ENCODE measurements at regions of chr7 and their contacts with region 1.

Region 1: GRCh38 chr7:130084037-130084875 is 13.9 kb downstream of the KLHDC10 start:
- DNase-seq: no peak
- ATAC-seq: peak; percentile 48; the same call in 1 of the 2 replicates
- H3K4me3 Mint-ChIP-seq: no peak overlapping the region
- H3K27ac Mint-ChIP-seq: no peak overlapping the region
- H3K4me1 Mint-ChIP-seq: no peaks in the 10 kb centered on the region
- H3K27me3 Mint-ChIP-seq: no peaks in the 10 kb centered on the region
- CTCF ChIP-seq: no peak; the same call in 1 of the 2 replicates

Region 2: GRCh38 chr7:130069978-130070860 is 14.0 kb before region 1 on chr7 and contains the start of gene KLHDC10:
- CTCF ChIA-PET with region 1: interaction called, 27 read pairs
- POLR2A ChIA-PET with region 1: no interaction called
- DNase-seq: peak; percentile 95
- ATAC-seq: peak; percentile 92
- H3K4me3 Mint-ChIP-seq: peak within 1 kb of the TSS; percentile 93
- H3K27ac Mint-ChIP-seq: peak within 1 kb of the TSS; percentile 94
- H3K4me1 Mint-ChIP-seq: peaks cover 25% of the 10 kb centered on the region
- H3K27me3 Mint-ChIP-seq: no peaks in the 10 kb centered on the region
- CTCF ChIP-seq: no peak
- total RNA-seq, gene KLHDC10: 14.4 to 16.5 TPM (median 15.0 TPM) in 3 replicates

Region 3: DNA sequence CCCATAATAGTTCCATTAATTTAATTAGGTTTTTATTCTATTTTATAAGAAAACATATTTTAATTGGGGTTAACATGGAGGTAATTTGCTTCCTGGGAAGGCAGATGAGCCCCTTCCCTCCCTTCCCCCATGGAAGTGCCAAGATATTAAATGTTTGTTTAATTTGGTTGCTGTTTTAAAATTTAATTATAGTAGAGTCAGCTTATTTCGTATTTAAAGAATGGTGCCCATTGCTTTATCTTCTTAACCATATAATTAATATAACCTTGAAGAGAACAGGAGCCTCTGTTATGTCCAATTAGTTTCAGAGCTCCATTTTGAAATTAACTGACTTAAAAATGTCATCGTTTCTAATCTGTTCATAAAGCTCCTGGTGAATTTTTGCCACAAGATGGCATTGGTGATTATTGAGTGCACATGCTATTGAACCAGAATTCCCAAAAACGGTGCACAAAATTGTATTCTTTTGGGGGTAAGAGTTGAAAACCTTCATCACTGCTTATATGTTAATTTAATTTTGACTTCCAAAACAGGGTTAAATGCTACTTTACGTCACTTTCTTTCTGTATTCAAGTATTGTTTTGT is 12.1 kb after region 1 on chr7:
- CTCF ChIA-PET with region 1: interaction called, 14 read pairs
- POLR2A ChIA-PET with region 1: no interaction called
- DNase-seq: no peak
- ATAC-seq: no peak
- H3K4me3 Mint-ChIP-seq: no peak overlapping the region
- H3K27ac Mint-ChIP-seq: no peak overlapping the region
- H3K4me1 Mint-ChIP-seq: no peaks in the 10 kb centered on the region
- H3K27me3 Mint-ChIP-seq: no peaks in the 10 kb centered on the region
- CTCF ChIP-seq: no peak

Region 4: GRCh38 chr7:130102588-130102987 is 18.3 kb after region 1 on chr7:
- CTCF ChIA-PET with region 1: interaction called, 12 read pairs
- POLR2A ChIA-PET with region 1: no interaction called
- DNase-seq: no peak
- ATAC-seq: no peak
- H3K4me3 Mint-ChIP-seq: no peak overlapping the region
- H3K27ac Mint-ChIP-seq: no peak overlapping the region
- H3K4me1 Mint-ChIP-seq: 0 out of 2 replicates have a peak, but pooled peaks cover 3% of the 10 kb centered on the region
- H3K27me3 Mint-ChIP-seq: no peaks in the 10 kb centered on the region
- CTCF ChIP-seq: no peak

Region 5: GRCh38 chr7:130127821-130128317 is 43.6 kb after region 1 on chr7:
- CTCF ChIA-PET with region 1: no interaction called
- POLR2A ChIA-PET with region 1: no interaction called
- DNase-seq: no peak
- ATAC-seq: no peak
- H3K4me3 Mint-ChIP-seq: no peak overlapping the region
- H3K27ac Mint-ChIP-seq: no peak overlapping the region
- H3K4me1 Mint-ChIP-seq: peaks cover 9% of the 10 kb centered on the region
- H3K27me3 Mint-ChIP-seq: no peaks in the 10 kb centered on the region
- CTCF ChIP-seq: no peak

Region 6: GRCh38 chr7:130160455-130160854 is 76.2 kb after region 1 on chr7:
- CTCF ChIA-PET with region 1: no interaction called
- POLR2A ChIA-PET with region 1: no interaction called
- DNase-seq: no peak
- ATAC-seq: no peak
- H3K4me3 Mint-ChIP-seq: no peak overlapping the region
- H3K27ac Mint-ChIP-seq: no peak overlapping the region
- H3K4me1 Mint-ChIP-seq: no peaks in the 10 kb centered on the region
- H3K27me3 Mint-ChIP-seq: no peaks in the 10 kb centered on the region
- CTCF ChIP-seq: no peak

Region 7: DNA sequence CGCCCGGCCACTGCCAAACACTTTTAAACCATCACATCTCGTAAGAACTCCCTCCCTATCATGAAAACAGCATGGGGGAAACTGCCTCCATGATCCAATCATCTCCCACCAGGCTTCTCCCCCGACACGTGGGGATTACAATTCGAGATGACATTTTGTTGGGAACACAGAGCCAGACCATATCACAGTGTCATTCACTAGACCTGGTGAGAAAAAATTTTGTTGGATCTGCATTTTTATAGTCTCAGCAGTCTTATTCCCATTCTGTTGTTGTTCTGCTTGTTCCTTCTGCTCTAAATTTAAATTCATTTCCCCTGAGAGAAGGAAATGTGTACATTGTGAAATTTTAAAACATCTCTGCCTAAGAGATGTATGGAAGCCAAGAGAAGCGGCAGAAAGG is 1238.6 kb after region 1 on chr7:
- CTCF ChIA-PET with region 1: no interaction called
- POLR2A ChIA-PET with region 1: interaction called, 10 read pairs
- DNase-seq: no peak
- ATAC-seq: no peak
- H3K4me3 Mint-ChIP-seq: no peak overlapping the region
- H3K27ac Mint-ChIP-seq: peak overlapping the region; percentile 34
- H3K4me1 Mint-ChIP-seq: peaks cover 28% of the 10 kb centered on the region
- H3K27me3 Mint-ChIP-seq: no peaks in the 10 kb centered on the region
- CTCF ChIP-seq: no peak

Measured in WTC11 (cell line).